Activated B cell treated with CpG ODN at 0.5 μM for 24 hours (primary cell): ENCODE measurements at regions of chr1 and their contacts with region 1.

Region 1: DNA sequence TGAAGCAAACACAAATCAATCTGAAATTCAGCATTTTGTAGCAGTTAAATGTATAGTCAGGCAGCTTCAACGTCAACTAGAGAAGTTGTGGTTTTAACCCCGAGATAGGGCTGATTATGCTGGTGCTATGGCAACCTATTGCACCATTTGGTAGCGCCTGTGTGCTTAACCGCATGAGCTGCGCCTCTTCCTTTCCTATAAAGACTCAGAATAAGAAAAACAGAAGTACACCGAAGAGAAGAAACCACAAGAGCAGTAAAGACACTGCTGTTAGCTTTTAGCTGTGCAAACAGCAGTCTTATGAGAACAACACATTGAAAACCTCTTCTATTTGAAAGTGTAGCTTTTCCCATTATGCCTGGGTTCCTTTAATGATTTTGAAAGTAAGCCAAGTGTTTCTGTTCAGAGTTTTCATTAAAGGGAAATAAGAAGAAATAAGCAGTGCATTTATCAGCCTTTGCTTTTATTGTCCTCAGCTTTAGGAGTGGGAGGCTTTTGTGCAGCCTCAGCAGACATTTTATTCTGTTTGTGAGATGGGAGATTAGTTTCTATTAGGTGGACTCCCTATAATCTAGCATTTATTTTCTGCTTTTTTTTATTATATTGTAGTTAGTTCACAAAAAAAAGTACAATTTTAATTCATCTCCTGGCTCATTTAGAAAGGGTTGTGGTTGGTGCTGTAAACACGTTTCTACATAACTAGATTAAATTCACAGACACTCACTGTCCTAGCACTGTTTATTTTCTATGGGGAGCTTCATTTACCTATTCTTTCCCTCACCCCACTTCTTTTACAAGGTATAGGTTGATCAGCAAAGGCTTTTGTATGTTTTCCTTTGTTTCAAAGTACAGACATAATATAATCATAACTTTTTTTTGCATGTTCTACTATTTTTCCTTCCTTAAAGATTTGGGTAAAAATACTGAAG is 43.3 kb downstream of the PTPRC start:
- DNase-seq: peak; percentile 42
- ATAC-seq: peak; percentile 73
- H3K4me3 Mint-ChIP-seq: peak overlapping the region; percentile 63
- H3K27ac Mint-ChIP-seq: peak overlapping the region; percentile 88
- H3K4me1 Mint-ChIP-seq: peaks cover 92% of the 10 kb centered on the region
- H3K27me3 Mint-ChIP-seq: no peaks in the 10 kb centered on the region
- CTCF ChIP-seq: no peak

Region 2: GRCh38 chr1:197915862-197916499 is 766.1 kb before region 1 on chr1:
- CTCF ChIA-PET with region 1: no interaction called
- POLR2A ChIA-PET with region 1: no interaction called
- intact Hi-C with region 1: loop called (anchors 5 kb)
- DNase-seq: no peak
- ATAC-seq: peak; percentile 12
- H3K4me3 Mint-ChIP-seq: peak overlapping the region; percentile 65
- H3K27ac Mint-ChIP-seq: no peak overlapping the region
- H3K4me1 Mint-ChIP-seq: peaks cover 83% of the 10 kb centered on the region
- H3K27me3 Mint-ChIP-seq: peaks cover 84% of the 10 kb centered on the region
- CTCF ChIP-seq: no peak

Region 3: GRCh38 chr1:198465201-198466144 is 216.6 kb before region 1 on chr1:
- CTCF ChIA-PET with region 1: interaction called, 6 read pairs
- POLR2A ChIA-PET with region 1: no interaction called
- intact Hi-C with region 1: loop called (anchors 1 kb)
- DNase-seq: no peak
- ATAC-seq: peak; percentile 49
- H3K4me3 Mint-ChIP-seq: no peak overlapping the region
- H3K27ac Mint-ChIP-seq: no peak overlapping the region
- H3K4me1 Mint-ChIP-seq: no peaks in the 10 kb centered on the region
- H3K27me3 Mint-ChIP-seq: no peaks in the 10 kb centered on the region
- CTCF ChIP-seq: no peak

Region 4: GRCh38 chr1:198633675-198634121 is 48.4 kb before region 1 on chr1:
- CTCF ChIA-PET with region 1: interaction called, 4 read pairs
- POLR2A ChIA-PET with region 1: interaction called, 39 read pairs
- intact Hi-C with region 1: no loop called
- DNase-seq: peak; percentile 27
- ATAC-seq: peak; percentile 87
- H3K4me3 Mint-ChIP-seq: peak overlapping the region; percentile 9
- H3K27ac Mint-ChIP-seq: peak overlapping the region; percentile 80
- H3K4me1 Mint-ChIP-seq: peaks cover 95% of the 10 kb centered on the region
- H3K27me3 Mint-ChIP-seq: no peaks in the 10 kb centered on the region
- CTCF ChIP-seq: no peak

Region 5: GRCh38 chr1:198657550-198658064 is 24.5 kb before region 1 on chr1:
- CTCF ChIA-PET with region 1: no interaction called
- POLR2A ChIA-PET with region 1: interaction called, 19 read pairs
- intact Hi-C with region 1: loop called (anchors 1 kb)
- DNase-seq: no peak
- ATAC-seq: peak; percentile 57
- H3K4me3 Mint-ChIP-seq: peak overlapping the region; percentile 56
- H3K27ac Mint-ChIP-seq: peak overlapping the region; percentile 84
- H3K4me1 Mint-ChIP-seq: peaks cover 78% of the 10 kb centered on the region
- H3K27me3 Mint-ChIP-seq: no peaks in the 10 kb centered on the region
- CTCF ChIP-seq: no peak

Region 6: DNA sequence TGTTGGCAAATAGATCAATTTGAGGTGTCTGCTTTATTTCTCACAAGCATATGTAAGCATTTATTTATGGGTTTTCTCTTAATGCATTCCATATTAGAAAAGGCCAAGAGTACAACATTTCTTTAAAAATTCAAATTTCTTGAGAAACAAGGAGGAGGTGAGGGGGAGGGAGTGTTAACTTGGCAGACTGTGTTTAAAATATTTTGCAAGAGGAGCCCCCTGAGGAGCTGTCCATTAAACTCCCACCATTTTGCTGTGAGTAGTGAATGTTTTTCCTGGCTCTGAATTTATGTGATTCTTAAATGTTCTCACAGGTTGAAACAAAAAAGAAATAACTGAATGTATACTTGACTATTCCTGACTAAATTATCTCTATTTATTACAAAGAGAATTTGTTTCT is 320.6 kb after region 1 on chr1:
- CTCF ChIA-PET with region 1: no interaction called
- POLR2A ChIA-PET with region 1: no interaction called
- intact Hi-C with region 1: no loop called
- DNase-seq: no peak
- ATAC-seq: no peak
- H3K4me3 Mint-ChIP-seq: no peak overlapping the region
- H3K27ac Mint-ChIP-seq: no peak overlapping the region
- H3K4me1 Mint-ChIP-seq: peaks cover 2% of the 10 kb centered on the region
- H3K27me3 Mint-ChIP-seq: no peaks in the 10 kb centered on the region
- CTCF ChIP-seq: no peak